ENCODE measurements at regions of chr7 and their contacts with region 1.

Region 1: GRCh38 chr7:11557627-11558026 is 274.4 kb downstream of the THSD7A start:
- DNase-seq: peak; percentile 46
- ATAC-seq: peak; percentile 100
- H3K4me3 ChIP-seq: no peak overlapping the region
- H3K27ac ChIP-seq: no peak overlapping the region
- H3K4me1 ChIP-seq: peaks cover 0 to 4% of the 10 kb centered on the region in 2 experiments; a peak in 1 of 4 replicates
- H3K27me3 ChIP-seq: no peaks in the 10 kb centered on the region
- CTCF ChIP-seq: peak; percentile 36 to 70 (median 59); a peak in 4 of 6 replicates
- POLR2A ChIP-seq: no peak
- RAD21 ChIP-seq: peak; percentile 68

Region 2: GRCh38 chr7:11373546-11374142 is 184.0 kb before region 1 on chr7:
- CTCF ChIA-PET with region 1: no interaction called
- POLR2A ChIA-PET with region 1: no interaction called
- RAD21 ChIA-PET with region 1: no interaction called
- intact Hi-C with region 1: loop called (anchors 5 kb)
- DNase-seq: peak; percentile 23
- ATAC-seq: peak; percentile 68
- H3K4me3 ChIP-seq: no peak overlapping the region
- H3K27ac ChIP-seq: no peak overlapping the region
- H3K4me1 ChIP-seq: no peaks in the 10 kb centered on the region
- H3K27me3 ChIP-seq: no peaks in the 10 kb centered on the region
- CTCF ChIP-seq: peak; percentile 37 to 65 (median 60); a peak in 5 of 6 replicates
- POLR2A ChIP-seq: no peak
- RAD21 ChIP-seq: peak; percentile 63

Region 3: DNA sequence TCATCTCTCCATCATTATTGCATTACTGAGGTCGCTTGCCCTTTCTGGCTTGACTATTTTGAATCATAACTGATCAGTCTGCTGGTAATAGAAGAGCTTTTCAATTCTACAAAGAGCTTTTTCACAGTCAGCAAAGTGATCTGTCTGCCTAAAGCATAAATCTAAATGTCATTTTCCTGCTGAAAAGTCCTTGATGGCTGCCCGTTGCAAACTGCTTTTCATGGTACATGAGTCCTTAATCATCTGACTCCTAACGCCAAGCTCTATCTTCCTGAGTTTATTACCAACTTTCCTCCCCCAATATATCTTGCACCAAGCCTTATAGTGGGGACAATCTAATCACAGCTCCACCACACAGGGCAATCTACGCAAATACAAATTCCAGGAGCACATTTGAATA is 234.5 kb after region 1 on chr7:
- CTCF ChIA-PET with region 1: no interaction called
- POLR2A ChIA-PET with region 1: no interaction called
- RAD21 ChIA-PET with region 1: no interaction called
- intact Hi-C with region 1: no loop called
- DNase-seq: no peak
- ATAC-seq: no peak
- H3K4me3 ChIP-seq: no peak overlapping the region
- H3K27ac ChIP-seq: no peak overlapping the region
- H3K4me1 ChIP-seq: no peaks in the 10 kb centered on the region
- H3K27me3 ChIP-seq: no peaks in the 10 kb centered on the region
- CTCF ChIP-seq: no peak
- POLR2A ChIP-seq: no peak
- RAD21 ChIP-seq: no peak

Region 4: GRCh38 chr7:13155188-13155587 is 1597.6 kb after region 1 on chr7:
- CTCF ChIA-PET with region 1: no interaction called
- POLR2A ChIA-PET with region 1: no interaction called
- RAD21 ChIA-PET with region 1: no interaction called
- intact Hi-C with region 1: no loop called
- DNase-seq: no peak
- ATAC-seq: no peak
- H3K4me3 ChIP-seq: no peak overlapping the region
- H3K27ac ChIP-seq: no peak overlapping the region
- H3K4me1 ChIP-seq: peaks cover 0 to 4% of the 10 kb centered on the region in 2 experiments; a peak in 2 of 4 replicates
- H3K27me3 ChIP-seq: no peaks in the 10 kb centered on the region
- CTCF ChIP-seq: no peak
- POLR2A ChIP-seq: no peak
- RAD21 ChIP-seq: no peak